Left ventricle myocardium inferior (tissue), 1 donor: ENCODE measurements at regions of chr1 and their contacts with region 1.

Region 1: GRCh38 chr1:19644681-19645410 is 735 bp downstream of the NBL1 start:
- DNase-seq: peak; percentile 48
- H3K4me3 ChIP-seq: peak overlapping the region; percentile 87
- H3K27ac ChIP-seq: peak overlapping the region; percentile 92
- H3K4me1 ChIP-seq: peaks cover 72% of the 10 kb centered on the region
- H3K27me3 ChIP-seq: peaks cover 4% of the 10 kb centered on the region
- CTCF ChIP-seq: no peak

Region 2: GRCh38 chr1:19203440-19203839 is 441.4 kb before region 1 on chr1:
- intact Hi-C with region 1: no loop called
- DNase-seq: no peak
- H3K4me3 ChIP-seq: no peak overlapping the region
- H3K27ac ChIP-seq: peak overlapping the region; percentile 36
- H3K4me1 ChIP-seq: peaks cover 93% of the 10 kb centered on the region
- H3K27me3 ChIP-seq: no peaks in the 10 kb centered on the region
- CTCF ChIP-seq: no peak

Region 3: GRCh38 chr1:19344372-19345230 is 300.2 kb before region 1 on chr1:
- intact Hi-C with region 1: loop called (anchors 5 kb)
- DNase-seq: peak; percentile 65
- H3K4me3 ChIP-seq: no peak overlapping the region
- H3K27ac ChIP-seq: peak overlapping the region; percentile 24
- H3K4me1 ChIP-seq: peaks cover 22% of the 10 kb centered on the region
- H3K27me3 ChIP-seq: no peaks in the 10 kb centered on the region
- CTCF ChIP-seq: peak; percentile 92